ENCODE measurements at regions of chr5 and their contacts with region 1.

Region 1: DNA sequence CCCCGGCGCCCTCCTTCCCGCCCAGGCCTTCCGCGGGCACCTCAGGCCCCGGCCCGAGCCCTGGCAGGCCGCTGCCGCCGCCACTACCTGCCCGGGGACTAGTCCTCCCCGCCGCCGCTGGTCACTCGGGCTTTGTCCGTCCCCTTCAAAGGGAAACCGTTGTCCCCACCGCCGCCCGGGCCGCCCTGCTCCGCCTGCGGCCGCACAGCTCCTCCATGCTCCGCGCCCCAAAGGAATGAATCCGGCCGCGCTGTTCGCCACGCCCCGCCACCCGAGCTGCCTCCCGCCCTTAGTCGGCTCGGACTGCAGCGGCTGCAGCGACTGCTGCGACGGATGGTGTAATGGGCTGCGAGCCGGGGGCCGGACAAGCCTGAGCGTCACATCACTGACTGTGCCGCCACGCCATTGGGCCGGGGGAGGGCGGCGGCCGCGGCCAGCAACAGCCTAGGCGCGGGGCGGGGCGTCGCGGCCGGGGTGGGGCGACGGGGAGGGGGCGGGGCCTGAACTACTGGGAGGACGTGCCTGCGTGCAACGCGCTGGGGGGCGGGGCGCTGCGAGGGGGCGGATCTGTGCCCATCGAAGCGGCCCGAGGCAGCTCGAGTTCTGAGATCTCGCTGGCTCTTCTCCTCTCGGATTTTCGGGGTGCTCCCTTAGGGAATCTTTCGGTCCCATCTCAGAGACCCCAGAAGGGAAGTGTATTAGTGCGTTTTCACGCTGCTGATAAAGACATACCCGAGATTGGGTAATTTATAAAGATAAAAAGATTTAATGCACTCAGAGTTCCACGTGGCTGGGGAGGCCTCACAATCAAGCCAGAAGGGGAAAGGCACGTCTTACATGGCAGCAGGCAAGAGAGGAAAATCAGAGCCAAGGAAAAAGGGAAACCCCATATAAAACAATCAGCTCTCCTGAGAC is at the start of gene FEM1C:
- DNase-seq: peak; percentile 99
- H3K4me3 ChIP-seq: peak within 1 kb of the TSS; percentile 72 to 98 (median 87)
- H3K27ac ChIP-seq: peak within 1 kb of the TSS; percentile 97 to 99 (median 98)
- H3K4me1 ChIP-seq: peaks cover 0 to 33% (median 21%) of the 10 kb centered on the region in 4 donors
- H3K27me3 ChIP-seq: no peaks in the 10 kb centered on the region
- CTCF ChIP-seq: no peak
- EP300 ChIP-seq: peak in 1 of 4 donors; percentile 27
- POLR2A ChIP-seq: peak; percentile 98 to 99
- total RNA-seq, gene FEM1C: 18.8 to 26.8 (median 26.6) TPM

Region 2: GRCh38 chr5:115419846-115420585 is 124.7 kb before region 1 on chr5:
- intact Hi-C with region 1: loop called (anchors 5 kb)
- DNase-seq: no peak
- H3K4me3 ChIP-seq: no peak overlapping the region
- H3K27ac ChIP-seq: peak overlapping the region in 1 of 4 donors; percentile 23
- H3K4me1 ChIP-seq: peaks cover 0 to 36% (median 29%) of the 10 kb centered on the region in 4 donors
- H3K27me3 ChIP-seq: no peaks in the 10 kb centered on the region
- CTCF ChIP-seq: no peak
- EP300 ChIP-seq: peak in 1 of 4 donors; percentile 13
- POLR2A ChIP-seq: no peak

Region 3: DNA sequence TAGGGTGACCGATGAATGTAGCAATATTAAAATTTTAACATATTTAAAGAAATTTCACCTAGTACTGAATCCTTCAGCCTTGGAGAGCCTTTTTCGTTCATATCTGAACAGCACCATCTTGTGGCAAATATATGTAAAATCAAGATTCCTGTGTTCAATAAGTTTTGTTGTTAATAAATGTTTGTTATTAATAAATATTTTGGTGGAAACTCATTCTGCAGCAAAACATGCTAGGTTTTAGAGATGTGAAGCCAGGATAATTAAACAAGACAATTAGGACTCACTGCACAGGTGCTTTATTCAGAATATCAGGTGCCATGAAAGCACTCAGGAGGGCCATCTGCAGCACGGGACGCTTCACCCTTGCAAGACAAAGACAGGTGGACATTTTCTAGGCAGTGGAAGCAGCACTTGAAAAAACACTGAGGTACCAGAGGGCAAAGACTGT is 41.9 kb after region 1 on chr5:
- intact Hi-C with region 1: loop called (anchors 5 kb)
- DNase-seq: no peak
- H3K4me3 ChIP-seq: no peak overlapping the region
- H3K27ac ChIP-seq: no peak overlapping the region
- H3K4me1 ChIP-seq: peaks cover 0 to 18% (median 14%) of the 10 kb centered on the region in 4 donors
- H3K27me3 ChIP-seq: no peaks in the 10 kb centered on the region
- CTCF ChIP-seq: peak; percentile 20 to 58 (median 43)
- EP300 ChIP-seq: no peak
- POLR2A ChIP-seq: no peak

Region 4: GRCh38 chr5:115625579-115626444 is 81.1 kb after region 1 on chr5 and contains the start of gene TMED7:
- intact Hi-C with region 1: loop called (anchors 5 kb)
- DNase-seq: peak; percentile 100
- H3K4me3 ChIP-seq: peak within 1 kb of the TSS; percentile 76 to 97 (median 90)
- H3K27ac ChIP-seq: peak within 1 kb of the TSS; percentile 91 to 97 (median 95)
- H3K4me1 ChIP-seq: peaks cover 0 to 46% (median 36%) of the 10 kb centered on the region in 4 donors
- H3K27me3 ChIP-seq: no peaks in the 10 kb centered on the region
- CTCF ChIP-seq: no peak
- EP300 ChIP-seq: peak in 1 of 4 donors; percentile 50
- POLR2A ChIP-seq: peak; percentile 65 to 79
- total RNA-seq, gene TMED7: 80.8 to 104 (median 88.2) TPM

Region 5: GRCh38 chr5:115718927-115719326 is 174.2 kb after region 1 on chr5:
- intact Hi-C with region 1: no loop called
- DNase-seq: no peak
- H3K4me3 ChIP-seq: no peak overlapping the region
- H3K27ac ChIP-seq: peak overlapping the region in 1 of 4 donors; percentile 34
- H3K4me1 ChIP-seq: no peaks in the 10 kb centered on the region
- H3K27me3 ChIP-seq: no peaks in the 10 kb centered on the region
- CTCF ChIP-seq: no peak
- EP300 ChIP-seq: no peak
- POLR2A ChIP-seq: no peak

Measured in sigmoid colon (tissue), 7 donors.